HEK293T (cell line): ENCODE measurements at regions of chr16 and their contacts with region 1.

Region 1: DNA sequence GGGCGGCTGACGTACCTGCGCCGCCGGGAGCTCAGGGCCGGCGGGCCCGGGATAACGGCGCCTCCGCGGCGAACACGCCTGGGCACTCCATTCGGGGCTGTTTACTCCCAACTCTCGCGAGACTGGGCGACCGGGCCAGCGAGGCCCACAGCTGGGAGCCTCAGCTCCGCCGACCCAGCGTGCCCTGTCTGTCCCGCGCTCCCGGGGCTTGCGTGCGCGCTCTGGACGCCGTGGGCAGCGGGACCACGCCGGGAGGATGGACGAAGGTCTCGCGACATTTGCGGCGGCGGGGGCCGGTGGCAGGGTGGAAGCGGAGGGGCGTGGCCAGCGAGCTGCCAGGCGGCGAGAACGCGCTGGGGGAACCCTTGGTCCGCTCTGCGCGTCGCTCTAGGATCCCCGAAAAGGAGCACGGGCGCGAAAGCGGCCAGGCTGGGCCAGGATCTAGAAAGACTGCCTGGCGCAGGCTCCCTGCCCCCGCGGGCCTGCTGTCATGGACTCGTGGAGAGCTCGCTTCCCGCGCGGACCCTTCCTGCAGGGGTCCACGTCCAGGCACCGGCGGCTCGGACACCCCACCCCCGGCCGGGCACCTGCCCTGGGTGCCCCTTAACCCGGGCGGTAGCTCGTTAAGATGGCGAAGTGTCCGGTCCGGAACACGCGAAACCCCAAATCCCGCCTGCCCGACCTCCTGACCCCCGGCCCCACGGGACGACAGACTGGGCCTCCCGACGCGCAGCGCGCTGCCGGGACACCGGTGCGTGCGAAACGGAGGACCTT is at the start of gene MBTPS1:
- DNase-seq: peak; percentile 97

Region 2: GRCh38 chr16:84105301-84105815 is 11.5 kb before region 1 on chr16:
- CTCF ChIA-PET with region 1: interaction called, 5 read pairs
- POLR2A ChIA-PET with region 1: interaction called, 19 read pairs
- DNase-seq: no peak

Region 3: DNA sequence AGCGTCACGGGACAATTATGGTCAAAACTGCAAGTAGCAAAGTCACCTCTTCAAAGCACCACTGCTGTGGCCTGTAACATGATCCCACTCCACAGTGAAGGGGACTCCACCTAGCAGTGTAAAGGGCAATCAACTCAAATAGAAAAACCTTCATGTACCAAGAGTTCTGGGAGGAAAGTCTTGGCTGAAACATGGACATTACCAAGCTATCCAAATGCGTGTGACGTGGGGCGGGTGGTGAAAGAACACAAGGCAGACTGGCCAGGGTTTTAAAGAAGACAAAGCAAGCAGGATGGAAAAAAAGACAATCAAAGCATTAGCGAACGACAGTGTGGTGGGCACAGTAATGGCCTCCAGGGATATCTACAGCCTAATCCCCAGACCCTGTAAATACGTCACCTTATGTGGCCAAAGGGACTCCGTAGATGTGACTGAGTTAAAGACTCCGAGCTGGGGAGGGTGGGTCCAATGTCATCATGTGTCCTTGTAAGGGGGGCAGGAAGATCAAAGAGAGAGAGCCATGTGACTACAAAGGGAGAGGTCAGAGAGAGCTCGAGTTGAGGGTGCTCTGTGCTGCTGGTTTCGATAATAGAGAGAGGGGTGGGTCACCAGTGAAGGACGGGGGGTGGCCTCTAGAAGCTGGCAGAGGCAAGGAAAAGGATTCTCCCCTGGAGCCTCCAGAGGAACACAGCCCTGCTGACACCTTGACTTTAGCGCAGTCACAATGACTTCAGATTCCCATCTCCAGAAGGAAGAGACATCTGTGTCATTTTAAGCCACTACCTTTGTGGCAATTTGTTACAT is 22.1 kb after region 1 on chr16:
- CTCF ChIA-PET with region 1: no interaction called
- POLR2A ChIA-PET with region 1: interaction called, 36 read pairs
- DNase-seq: peak; percentile 66

Region 4: GRCh38 chr16:84144859-84145639 is 28.1 kb after region 1 on chr16 and contains the starts of genes DNAAF1 and HSDL1:
- CTCF ChIA-PET with region 1: interaction called, 3 read pairs
- POLR2A ChIA-PET with region 1: interaction called, 36 read pairs
- DNase-seq: peak; percentile 96

Region 5: GRCh38 chr16:84150926-84151325 is 34.0 kb after region 1 on chr16:
- CTCF ChIA-PET with region 1: interaction called, 3 read pairs
- POLR2A ChIA-PET with region 1: interaction called, 10 read pairs
- DNase-seq: no peak

Region 6: GRCh38 chr16:84186685-84187437 is 70.0 kb after region 1 on chr16 and contains the start of gene TAF1C:
- CTCF ChIA-PET with region 1: interaction called, 3 read pairs
- POLR2A ChIA-PET with region 1: interaction called, 15 read pairs
- DNase-seq: peak; percentile 97